Heart left ventricle (tissue), 16 donors: ENCODE measurements at regions of chr19 and their contacts with region 1.

Region 1: GRCh38 chr19:48674921-48675824 is 2.4 kb upstream of the NTN5 start:
- DNase-seq: peak; percentile 79 to 87 (median 84)
- ATAC-seq: peak; percentile 58 to 89 (median 80)
- H3K4me3 ChIP-seq: no peak overlapping the region
- H3K27ac ChIP-seq: peak overlapping the region in 2 of 12 donors; percentile 2 to 46
- H3K4me1 ChIP-seq: peaks cover 0 to 12% (median 7%) of the 10 kb centered on the region in 12 donors
- H3K27me3 ChIP-seq: no peaks in the 10 kb centered on the region
- CTCF ChIP-seq: peak; percentile 76 to 94 (median 87)
- POLR2A ChIP-seq: no peak

Region 2: GRCh38 chr19:48646001-48646721 is 29.0 kb before region 1 on chr19 and contains the start of gene CA11:
- intact Hi-C with region 1: loop called in 2 of 10 experiments (anchors 1 kb)
- DNase-seq: peak; percentile 89 to 94 (median 91)
- ATAC-seq: peak; percentile 69 to 92 (median 92)
- H3K4me3 ChIP-seq: peak within 1 kb of the TSS; percentile 2 to 69 (median 58)
- H3K27ac ChIP-seq: peak within 1 kb of the TSS; percentile 56 to 91 (median 82)
- H3K4me1 ChIP-seq: peaks cover 0 to 29% (median 13%) of the 10 kb centered on the region in 12 donors
- H3K27me3 ChIP-seq: no peaks in the 10 kb centered on the region
- CTCF ChIP-seq: peak; percentile 82 to 98 (median 90)
- POLR2A ChIP-seq: no peak
- total RNA-seq, gene CA11: 2.2 to 14.6 (median 5.8) TPM

Region 3: GRCh38 chr19:48720613-48721296 is 45.6 kb after region 1 on chr19:
- intact Hi-C with region 1: loop called in 1 of 10 experiments (anchors 10 kb)
- DNase-seq: peak; percentile 97 to 100 (median 98)
- ATAC-seq: peak; percentile 81 to 88 (median 88)
- H3K4me3 ChIP-seq: peak overlapping the region; percentile 22 to 71 (median 60)
- H3K27ac ChIP-seq: peak overlapping the region; percentile 30 to 94 (median 87)
- H3K4me1 ChIP-seq: peaks cover 12 to 69% (median 49%) of the 10 kb centered on the region in 12 donors
- H3K27me3 ChIP-seq: no peaks in the 10 kb centered on the region
- CTCF ChIP-seq: peak in 1 of 12 donors; percentile 7
- POLR2A ChIP-seq: no peak

Region 4: DNA sequence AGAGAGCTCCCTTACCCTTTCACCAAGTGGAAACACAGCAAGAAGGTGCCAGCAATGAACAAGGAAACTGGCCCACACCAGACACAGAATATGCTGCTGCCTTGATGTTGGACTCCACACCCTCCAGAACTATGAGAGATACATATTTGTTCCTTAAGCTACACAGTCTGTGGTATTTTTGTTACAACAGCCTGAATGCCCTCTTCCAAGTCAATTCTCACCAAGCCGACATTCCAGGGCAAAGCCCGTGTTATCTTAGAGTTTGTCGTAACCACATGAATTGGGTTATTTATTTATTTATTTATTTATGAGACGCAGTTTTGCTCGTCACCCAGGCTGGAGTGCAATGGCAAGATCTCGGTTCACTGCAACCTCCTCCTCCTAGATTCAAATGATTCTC is 95.1 kb after region 1 on chr19:
- intact Hi-C with region 1: loop called in 1 of 10 experiments (anchors 10 kb)
- DNase-seq: no peak
- ATAC-seq: no peak
- H3K4me3 ChIP-seq: no peak overlapping the region
- H3K27ac ChIP-seq: no peak overlapping the region
- H3K4me1 ChIP-seq: peaks cover 0 to 9% (median 0%) of the 10 kb centered on the region in 12 donors
- H3K27me3 ChIP-seq: no peaks in the 10 kb centered on the region
- CTCF ChIP-seq: no peak
- POLR2A ChIP-seq: no peak

Region 5: GRCh38 chr19:48835734-48836088 is 160.5 kb after region 1 on chr19:
- intact Hi-C with region 1: loop called in 6 of 10 experiments (anchors 10 kb)
- DNase-seq: peak; percentile 88 to 95 (median 91)
- ATAC-seq: peak; percentile 84 to 95 (median 94)
- H3K4me3 ChIP-seq: peak overlapping the region in 11 of 12 donors; percentile 2 to 57 (median 47)
- H3K27ac ChIP-seq: peak overlapping the region in 7 of 12 donors; percentile 52 to 86 (median 69)
- H3K4me1 ChIP-seq: peaks cover 0 to 19% (median 10%) of the 10 kb centered on the region in 12 donors
- H3K27me3 ChIP-seq: peaks cover 0 to 4% (median 0%) of the 10 kb centered on the region in 9 donors
- CTCF ChIP-seq: peak; percentile 76 to 94 (median 88)
- POLR2A ChIP-seq: no peak